Psoas muscle (tissue), 8 donors: ENCODE measurements at regions of chr19 and their contacts with region 1.

Region 1: DNA sequence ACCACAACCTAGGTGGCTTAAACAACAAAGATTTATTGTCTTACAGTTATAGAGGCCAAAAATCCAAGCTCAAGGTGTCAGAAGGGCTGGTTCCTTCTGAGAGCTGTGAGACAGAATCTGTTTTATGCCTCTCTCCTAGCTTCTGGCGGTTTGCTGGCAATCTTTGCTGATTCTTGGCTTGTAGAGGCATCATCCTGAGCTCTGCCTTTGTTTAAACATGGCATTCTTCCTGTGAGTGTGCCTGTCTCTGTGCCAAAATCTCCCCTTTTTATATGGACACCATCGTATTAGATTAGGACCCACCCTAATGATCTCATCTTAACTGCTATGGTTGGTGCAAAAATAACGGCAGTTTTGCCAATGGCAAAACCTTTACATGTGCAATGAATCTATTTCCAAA is 169.1 kb downstream of the CACNA1A start:
- DNase-seq: no peak
- ATAC-seq: no peak
- H3K4me3 ChIP-seq: no peak overlapping the region
- H3K27ac ChIP-seq: no peak overlapping the region
- H3K4me1 ChIP-seq: no peaks in the 10 kb centered on the region
- H3K27me3 ChIP-seq: peaks cover 0 to 3% (median 0%) of the 10 kb centered on the region in 3 donors
- CTCF ChIP-seq: no peak

Region 2: GRCh38 chr19:13302526-13303270 is 34.5 kb before region 1 on chr19:
- intact Hi-C with region 1: loop called in 1 of 2 experiments (anchors 2 kb)
- DNase-seq: no peak
- ATAC-seq: no peak
- H3K4me3 ChIP-seq: no peak overlapping the region
- H3K27ac ChIP-seq: no peak overlapping the region
- H3K4me1 ChIP-seq: no peaks in the 10 kb centered on the region
- H3K27me3 ChIP-seq: peaks cover 0 to 52% (median 6%) of the 10 kb centered on the region in 3 donors
- CTCF ChIP-seq: no peak

Region 3: DNA sequence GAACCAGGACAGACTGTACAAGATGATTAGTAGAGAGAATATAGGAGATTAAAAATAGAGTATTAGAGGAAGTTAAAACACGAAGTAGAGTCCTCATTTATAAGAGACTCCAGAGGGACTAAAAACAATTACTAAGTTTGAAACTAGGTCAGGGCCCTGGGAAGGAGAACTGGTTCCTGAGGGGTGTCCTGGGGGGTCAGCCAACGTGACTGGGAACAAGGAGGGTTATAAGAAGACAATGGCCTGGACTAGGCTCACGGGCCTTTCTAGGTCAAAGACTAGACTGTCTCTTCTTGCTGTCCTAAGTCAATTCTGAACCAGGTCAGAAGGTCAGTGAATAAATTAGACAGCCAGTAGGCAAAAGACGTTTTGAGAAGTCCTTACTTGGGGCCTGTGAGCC is 21.7 kb before region 1 on chr19:
- intact Hi-C with region 1: no loop called
- DNase-seq: no peak
- ATAC-seq: no peak
- H3K4me3 ChIP-seq: no peak overlapping the region
- H3K27ac ChIP-seq: no peak overlapping the region
- H3K4me1 ChIP-seq: no peaks in the 10 kb centered on the region
- H3K27me3 ChIP-seq: no peaks in the 10 kb centered on the region
- CTCF ChIP-seq: no peak